ENCODE measurements at regions of chr3 and their contacts with region 1.

Region 1: DNA sequence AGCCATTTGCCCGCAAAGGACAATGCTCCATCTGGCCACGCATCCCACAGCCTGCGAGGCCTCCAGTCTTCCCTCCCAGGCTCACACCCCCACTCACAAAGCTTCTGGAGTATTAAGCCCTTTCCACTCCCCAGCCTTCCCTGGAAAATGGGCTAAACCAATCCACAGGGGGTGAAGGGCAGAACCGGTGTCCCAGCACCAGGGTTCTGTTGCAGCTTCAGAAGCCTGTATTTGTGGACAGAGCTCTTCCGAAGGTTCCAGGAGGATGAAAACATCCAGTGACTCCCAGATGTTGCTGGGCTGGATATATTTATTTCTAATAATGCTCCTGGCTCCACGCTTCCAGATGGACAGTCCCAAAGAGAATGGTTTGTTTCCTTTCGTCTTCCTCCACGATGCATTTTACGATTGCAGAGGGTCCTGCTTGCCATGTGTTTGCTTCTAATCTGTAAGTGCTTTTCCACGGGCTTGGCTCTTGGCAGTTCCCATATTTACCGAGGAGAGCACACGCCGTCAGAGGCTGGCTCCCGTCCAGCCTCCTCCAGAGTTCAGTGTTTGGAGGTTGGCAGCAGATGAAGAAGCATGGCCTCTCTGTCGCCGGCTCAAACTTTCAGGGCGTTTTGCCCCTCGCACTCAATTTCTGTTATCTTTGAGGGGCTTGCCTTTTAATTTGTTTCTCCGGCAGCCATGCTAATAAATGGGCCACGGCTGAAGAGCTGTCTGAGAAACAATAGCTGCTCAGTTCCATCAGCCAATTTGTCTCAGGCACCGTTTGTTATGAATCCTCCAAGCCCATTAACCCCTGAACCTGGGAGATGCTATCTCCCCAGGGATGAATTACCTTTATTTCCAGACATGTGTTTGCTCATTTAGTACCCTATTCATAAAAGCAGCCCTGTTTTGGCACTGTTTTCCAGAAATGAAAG is 367.9 kb upstream of the PROK2 start:
- DNase-seq: peak; percentile 86
- ATAC-seq: peak; percentile 93

Region 2: DNA sequence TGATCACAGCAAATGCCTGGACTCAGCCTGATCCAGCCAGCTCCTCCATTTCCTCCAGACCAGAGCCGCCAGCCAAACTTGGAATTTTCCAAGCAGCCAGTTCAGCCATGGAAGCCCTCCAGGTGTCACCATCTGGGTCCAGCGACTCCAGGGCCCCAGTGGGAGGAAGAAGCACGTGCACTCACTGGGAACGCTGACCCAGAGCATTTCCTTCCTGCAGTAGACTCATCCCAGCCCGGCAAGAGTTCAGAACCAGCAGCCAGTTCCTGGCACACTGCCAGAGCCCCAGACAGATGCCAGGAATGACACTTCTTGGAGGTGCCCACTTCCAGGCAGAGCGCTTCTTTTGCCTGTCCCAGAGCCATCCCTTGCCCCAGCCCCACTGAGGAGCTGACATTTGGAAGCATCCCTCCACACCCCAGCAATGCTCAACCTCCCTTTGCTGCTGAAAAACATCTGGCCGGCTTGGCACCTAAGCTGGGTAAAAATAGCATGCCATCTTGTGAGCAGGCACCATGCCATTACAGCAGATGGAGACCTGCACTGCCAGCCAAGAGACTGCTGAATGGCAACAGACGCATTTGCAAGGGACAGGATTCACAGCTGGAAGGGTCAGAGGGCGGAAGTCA is 92.5 kb after region 1 on chr3:
- intact Hi-C with region 1: loop called (anchors 10 kb)
- DNase-seq: peak; percentile 78
- ATAC-seq: peak; percentile 91

Region 3: GRCh38 chr3:72413228-72413627 is 260.4 kb after region 1 on chr3:
- intact Hi-C with region 1: no loop called
- DNase-seq: no peak
- ATAC-seq: peak; percentile 64